Caco-2 (cell line): ENCODE measurements at regions of chr20 and their contacts with region 1.

Region 1: GRCh38 chr20:31661625-31662371 is 24.1 kb downstream of the COX4I2 start:
- DNase-seq: peak; percentile 87 to 90
- H3K4me3 ChIP-seq: no peak overlapping the region
- H3K4me3 Mint-ChIP-seq: peak overlapping the region; percentile 43
- H3K27ac Mint-ChIP-seq: peak overlapping the region; percentile 79
- H3K4me1 ChIP-seq: peaks cover 57% of the 10 kb centered on the region
- H3K4me1 Mint-ChIP-seq: peaks cover 68% of the 10 kb centered on the region
- H3K27me3 ChIP-seq: no peaks in the 10 kb centered on the region
- H3K27me3 Mint-ChIP-seq: no peaks in the 10 kb centered on the region
- CTCF ChIP-seq: peak; percentile 93 to 98

Region 2: GRCh38 chr20:31547017-31547675 is 114.7 kb before region 1 on chr20:
- CTCF ChIA-PET with region 1: no interaction called
- POLR2A ChIA-PET with region 1: no interaction called
- intact Hi-C with region 1: no loop called
- DNase-seq: peak; percentile 81 to 85
- H3K4me3 ChIP-seq: peak overlapping the region; percentile 26
- H3K4me3 Mint-ChIP-seq: peak overlapping the region; percentile 69
- H3K27ac Mint-ChIP-seq: peak overlapping the region; percentile 80
- H3K4me1 ChIP-seq: peaks cover 2% of the 10 kb centered on the region; the same call in 1 of the 2 replicates
- H3K4me1 Mint-ChIP-seq: peaks cover 4% of the 10 kb centered on the region
- H3K27me3 ChIP-seq: no peaks in the 10 kb centered on the region
- H3K27me3 Mint-ChIP-seq: no peaks in the 10 kb centered on the region
- CTCF ChIP-seq: peak in 1 of 2 experiments; percentile 11

Region 3: GRCh38 chr20:31580706-31581105 is 81.1 kb before region 1 on chr20:
- CTCF ChIA-PET with region 1: no interaction called
- POLR2A ChIA-PET with region 1: no interaction called
- intact Hi-C with region 1: no loop called
- DNase-seq: no peak
- H3K4me3 ChIP-seq: no peak overlapping the region
- H3K4me3 Mint-ChIP-seq: no peak overlapping the region
- H3K27ac Mint-ChIP-seq: peak overlapping the region; percentile 4
- H3K4me1 ChIP-seq: no peaks in the 10 kb centered on the region
- H3K4me1 Mint-ChIP-seq: peaks cover 14% of the 10 kb centered on the region
- H3K27me3 ChIP-seq: no peaks in the 10 kb centered on the region
- H3K27me3 Mint-ChIP-seq: no peaks in the 10 kb centered on the region
- CTCF ChIP-seq: no peak

Region 4: GRCh38 chr20:31630187-31630790 is 31.5 kb before region 1 on chr20:
- CTCF ChIA-PET with region 1: interaction called, 54 read pairs
- POLR2A ChIA-PET with region 1: interaction called, 3 read pairs
- intact Hi-C with region 1: loop called (anchors 1 kb)
- DNase-seq: no peak
- H3K4me3 ChIP-seq: no peak overlapping the region
- H3K4me3 Mint-ChIP-seq: no peak overlapping the region
- H3K27ac Mint-ChIP-seq: no peak overlapping the region
- H3K4me1 ChIP-seq: peaks cover 9% of the 10 kb centered on the region; the same call in 1 of the 2 replicates
- H3K4me1 Mint-ChIP-seq: no peaks in the 10 kb centered on the region
- H3K27me3 ChIP-seq: no peaks in the 10 kb centered on the region
- H3K27me3 Mint-ChIP-seq: no peaks in the 10 kb centered on the region
- CTCF ChIP-seq: no peak

Region 5: DNA sequence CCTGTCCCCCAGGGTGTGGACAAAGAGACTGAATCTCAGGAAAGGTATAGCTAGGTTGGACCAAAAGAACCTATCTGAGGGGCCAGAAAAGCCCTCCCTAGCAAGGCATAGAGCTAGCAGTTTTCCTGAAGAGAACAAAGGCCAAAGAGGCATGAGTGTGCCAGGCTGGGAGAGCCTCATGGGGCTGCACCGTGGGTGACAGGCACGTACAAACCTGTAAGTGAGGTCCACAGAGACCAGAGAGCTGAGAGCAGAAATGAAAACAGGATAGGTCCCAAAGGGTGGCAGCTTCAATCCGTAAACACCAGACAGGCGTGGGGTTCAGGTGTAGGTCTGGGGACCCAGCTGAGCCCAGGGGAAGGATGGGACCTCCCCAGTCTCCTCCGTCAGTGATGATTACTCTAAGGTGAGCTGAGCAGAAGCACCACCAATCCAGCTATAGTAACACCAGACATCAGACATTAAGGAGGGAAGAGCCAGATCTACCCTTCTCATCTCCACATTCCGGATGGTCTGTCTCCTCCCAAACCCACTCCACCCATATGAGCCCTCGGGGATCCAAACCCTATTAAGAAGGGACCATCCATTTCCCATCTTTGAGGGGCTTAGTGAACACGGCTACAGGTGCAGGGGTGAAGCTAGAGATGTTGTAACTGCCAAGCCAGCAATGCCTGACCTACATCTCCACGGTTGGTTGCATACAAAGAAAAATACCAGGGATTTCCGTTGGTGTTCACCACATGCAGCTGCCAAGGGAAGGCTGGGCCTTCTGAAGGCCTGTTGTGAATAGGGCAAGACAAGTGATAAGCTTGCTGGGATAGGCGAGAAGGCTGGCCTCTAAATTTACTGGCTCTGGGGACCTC is 22.6 kb after region 1 on chr20:
- CTCF ChIA-PET with region 1: interaction called, 52 read pairs
- POLR2A ChIA-PET with region 1: interaction called, 7 read pairs
- intact Hi-C with region 1: no loop called
- DNase-seq: no peak
- H3K4me3 ChIP-seq: no peak overlapping the region
- H3K4me3 Mint-ChIP-seq: no peak overlapping the region
- H3K27ac Mint-ChIP-seq: peak overlapping the region; percentile 73
- H3K4me1 ChIP-seq: peaks cover 85% of the 10 kb centered on the region
- H3K4me1 Mint-ChIP-seq: peaks cover 86% of the 10 kb centered on the region
- H3K27me3 ChIP-seq: no peaks in the 10 kb centered on the region
- H3K27me3 Mint-ChIP-seq: no peaks in the 10 kb centered on the region
- CTCF ChIP-seq: no peak

Region 6: GRCh38 chr20:31698803-31699718 is 37.3 kb after region 1 on chr20:
- CTCF ChIA-PET with region 1: interaction called, 14 read pairs
- POLR2A ChIA-PET with region 1: interaction called, 17 read pairs
- intact Hi-C with region 1: loop called (anchors 1 kb)
- DNase-seq: peak in 1 of 2 experiments; percentile 57
- H3K4me3 ChIP-seq: no peak overlapping the region
- H3K4me3 Mint-ChIP-seq: peak overlapping the region; percentile 44
- H3K27ac Mint-ChIP-seq: peak overlapping the region; percentile 89
- H3K4me1 ChIP-seq: peaks cover 94% of the 10 kb centered on the region
- H3K4me1 Mint-ChIP-seq: peaks cover 73% of the 10 kb centered on the region
- H3K27me3 ChIP-seq: no peaks in the 10 kb centered on the region
- H3K27me3 Mint-ChIP-seq: no peaks in the 10 kb centered on the region
- CTCF ChIP-seq: no peak

Region 7: GRCh38 chr20:31712564-31713311 is 50.9 kb after region 1 on chr20:
- CTCF ChIA-PET with region 1: interaction called, 36 read pairs
- POLR2A ChIA-PET with region 1: interaction called, 21 read pairs
- intact Hi-C with region 1: loop called (anchors 1 kb)
- DNase-seq: peak; percentile 98 to 99
- H3K4me3 ChIP-seq: no peak overlapping the region
- H3K4me3 Mint-ChIP-seq: peak overlapping the region; percentile 69
- H3K27ac Mint-ChIP-seq: peak overlapping the region; percentile 97
- H3K4me1 ChIP-seq: peaks cover 95% of the 10 kb centered on the region
- H3K4me1 Mint-ChIP-seq: peaks cover 86% of the 10 kb centered on the region
- H3K27me3 ChIP-seq: no peaks in the 10 kb centered on the region
- H3K27me3 Mint-ChIP-seq: no peaks in the 10 kb centered on the region
- CTCF ChIP-seq: no peak

Region 8: GRCh38 chr20:31811796-31812728 is 150.3 kb after region 1 on chr20:
- CTCF ChIA-PET with region 1: no interaction called
- POLR2A ChIA-PET with region 1: no interaction called
- intact Hi-C with region 1: no loop called
- DNase-seq: no peak
- H3K4me3 ChIP-seq: no peak overlapping the region
- H3K4me3 Mint-ChIP-seq: no peak overlapping the region
- H3K27ac Mint-ChIP-seq: no peak overlapping the region
- H3K4me1 ChIP-seq: no peaks in the 10 kb centered on the region
- H3K4me1 Mint-ChIP-seq: no peaks in the 10 kb centered on the region
- H3K27me3 ChIP-seq: no peaks in the 10 kb centered on the region
- H3K27me3 Mint-ChIP-seq: no peaks in the 10 kb centered on the region
- CTCF ChIP-seq: no peak